ENCODE measurements at regions of chr15 and their contacts with region 1.

Region 1: GRCh38 chr15:50670115-50670514 is 16.5 kb downstream of the TRPM7 start:
- DNase-seq: no peak
- ATAC-seq: no peak
- H3K4me3 ChIP-seq: no peak overlapping the region
- H3K27ac ChIP-seq: no peak overlapping the region
- H3K4me1 ChIP-seq: no peaks in the 10 kb centered on the region
- H3K27me3 ChIP-seq: no peaks in the 10 kb centered on the region

Region 2: GRCh38 chr15:50613600-50613999 is 56.5 kb before region 1 on chr15:
- intact Hi-C with region 1: no loop called
- DNase-seq: no peak
- ATAC-seq: no peak
- H3K4me3 ChIP-seq: no peak overlapping the region
- H3K27ac ChIP-seq: no peak overlapping the region
- H3K4me1 ChIP-seq: no peaks in the 10 kb centered on the region
- H3K27me3 ChIP-seq: no peaks in the 10 kb centered on the region

Region 3: GRCh38 chr15:50876989-50877360 is 206.9 kb after region 1 on chr15:
- intact Hi-C with region 1: loop called (anchors 2 to 5 kb)
- DNase-seq: peak in 1 of 2 donors; percentile 71
- ATAC-seq: peak; percentile 90
- H3K4me3 ChIP-seq: peak overlapping the region; percentile 51 to 53
- H3K27ac ChIP-seq: no peak overlapping the region
- H3K4me1 ChIP-seq: no peaks in the 10 kb centered on the region
- H3K27me3 ChIP-seq: no peaks in the 10 kb centered on the region

Region 4: GRCh38 chr15:51192521-51193280 is 522.6 kb after region 1 on chr15:
- intact Hi-C with region 1: no loop called
- DNase-seq: peak; percentile 94 to 97
- ATAC-seq: peak; percentile 92
- H3K4me3 ChIP-seq: no peak overlapping the region
- H3K27ac ChIP-seq: peak overlapping the region; percentile 33 to 68
- H3K4me1 ChIP-seq: peaks cover 4 to 7% of the 10 kb centered on the region in 2 donors
- H3K27me3 ChIP-seq: no peaks in the 10 kb centered on the region

Measured in aorta (tissue), 5 donors.